Sciatic nerve (tissue), 2 donors: ENCODE measurements at regions of chr17 and their contacts with region 1.

Region 1: DNA sequence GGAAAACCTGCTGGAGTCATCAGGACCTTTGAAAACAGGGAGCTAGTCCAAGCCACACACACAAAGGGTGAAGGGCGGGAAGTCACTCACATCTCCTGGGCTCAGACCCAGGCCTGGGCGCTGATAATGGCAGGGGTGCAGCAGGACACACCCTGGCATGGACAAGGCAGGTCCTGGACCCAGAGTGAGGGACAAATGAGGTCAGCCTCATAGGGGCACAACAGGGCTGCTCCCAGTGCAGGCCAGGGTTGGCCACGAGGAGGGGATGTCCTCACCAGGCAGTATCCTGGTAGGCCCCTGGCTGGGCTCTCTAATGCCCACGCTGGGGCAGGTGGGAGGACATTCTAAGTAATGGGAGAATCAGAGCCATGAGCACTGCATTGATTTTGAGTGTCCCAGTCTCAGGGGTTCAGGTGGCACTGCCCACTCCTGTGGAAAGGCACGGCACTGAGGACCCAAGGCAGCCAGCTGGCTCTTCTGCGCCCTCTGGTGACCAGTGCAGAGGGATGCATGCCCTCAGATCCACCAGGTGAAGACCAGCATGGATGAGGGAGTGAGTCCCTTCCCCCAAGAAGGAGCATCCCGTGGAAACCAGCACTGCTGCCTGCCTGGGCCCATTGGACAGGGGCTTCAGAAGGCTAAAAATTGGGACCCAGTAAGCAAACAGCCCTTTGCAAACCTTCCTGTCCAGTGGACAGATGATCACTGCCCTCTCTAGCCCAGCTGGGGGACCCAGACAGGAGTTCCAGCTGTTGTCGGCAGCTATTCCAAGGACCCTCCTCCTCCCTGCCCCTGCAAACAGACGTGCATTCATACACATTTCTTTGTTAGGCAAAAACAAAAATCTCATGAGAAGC is 23.4 kb upstream of the SREBF1 start:
- DNase-seq: peak; percentile 85
- ATAC-seq: peak; percentile 92

Region 2: DNA sequence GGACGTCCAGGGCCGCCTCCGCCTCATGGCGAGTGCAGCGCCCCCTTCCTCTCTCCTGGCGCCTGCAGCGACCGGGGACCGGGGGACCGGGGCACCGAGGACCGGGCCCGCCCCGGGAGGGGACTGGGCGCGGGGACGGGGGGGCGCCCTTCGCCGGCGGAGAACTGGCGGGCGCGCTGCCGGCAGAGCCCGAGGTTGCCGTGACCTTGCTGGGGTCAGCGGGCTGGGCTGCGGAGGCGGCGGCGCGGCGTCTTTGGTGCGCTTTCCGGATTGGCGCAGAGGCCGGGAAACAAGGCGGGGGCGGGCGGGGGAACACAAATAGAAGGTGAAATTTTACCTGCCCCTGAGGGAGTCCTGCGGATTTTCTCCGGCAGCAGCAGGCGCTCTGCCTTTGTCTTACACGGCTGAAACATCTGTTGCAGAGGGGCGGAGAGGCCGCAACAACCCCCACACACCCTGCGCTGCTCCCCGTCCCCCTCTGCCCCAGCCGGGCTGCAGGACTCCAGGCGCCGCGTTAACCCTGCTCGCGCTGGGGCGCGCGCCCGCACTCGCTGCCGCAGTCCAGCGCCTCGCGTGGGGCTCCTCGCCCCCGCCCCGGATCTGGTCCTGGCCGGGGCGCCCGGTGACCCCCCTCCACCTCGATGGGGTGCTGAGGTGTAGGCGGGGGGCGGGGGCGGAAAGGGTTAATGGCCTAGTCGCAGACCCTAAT is 76.9 kb before region 1 on chr17:
- intact Hi-C with region 1: loop called (anchors 10 kb)
- DNase-seq: no peak
- ATAC-seq: no peak

Region 3: GRCh38 chr17:17816831-17817551 is 43.1 kb before region 1 on chr17:
- intact Hi-C with region 1: loop called (anchors 2 kb)
- DNase-seq: no peak
- ATAC-seq: no peak